Activated CD8-positive, alpha-beta T cell treated with anti-CD3 and anti-CD28 coated beads for 36 hours (primary cell): ENCODE measurements at regions of chr12 and their contacts with region 1.

Region 1: GRCh38 chr12:53344824-53345485 is 8.8 kb upstream of the SP7 start:
- DNase-seq: peak; percentile 85
- ATAC-seq: peak; percentile 86
- H3K4me3 Mint-ChIP-seq: peak overlapping the region; percentile 82
- H3K27ac Mint-ChIP-seq: peak overlapping the region; percentile 71
- H3K4me1 Mint-ChIP-seq: peaks cover 19% of the 10 kb centered on the region
- H3K27me3 Mint-ChIP-seq: peaks cover 3% of the 10 kb centered on the region
- CTCF ChIP-seq: peak; percentile 75

Region 2: DNA sequence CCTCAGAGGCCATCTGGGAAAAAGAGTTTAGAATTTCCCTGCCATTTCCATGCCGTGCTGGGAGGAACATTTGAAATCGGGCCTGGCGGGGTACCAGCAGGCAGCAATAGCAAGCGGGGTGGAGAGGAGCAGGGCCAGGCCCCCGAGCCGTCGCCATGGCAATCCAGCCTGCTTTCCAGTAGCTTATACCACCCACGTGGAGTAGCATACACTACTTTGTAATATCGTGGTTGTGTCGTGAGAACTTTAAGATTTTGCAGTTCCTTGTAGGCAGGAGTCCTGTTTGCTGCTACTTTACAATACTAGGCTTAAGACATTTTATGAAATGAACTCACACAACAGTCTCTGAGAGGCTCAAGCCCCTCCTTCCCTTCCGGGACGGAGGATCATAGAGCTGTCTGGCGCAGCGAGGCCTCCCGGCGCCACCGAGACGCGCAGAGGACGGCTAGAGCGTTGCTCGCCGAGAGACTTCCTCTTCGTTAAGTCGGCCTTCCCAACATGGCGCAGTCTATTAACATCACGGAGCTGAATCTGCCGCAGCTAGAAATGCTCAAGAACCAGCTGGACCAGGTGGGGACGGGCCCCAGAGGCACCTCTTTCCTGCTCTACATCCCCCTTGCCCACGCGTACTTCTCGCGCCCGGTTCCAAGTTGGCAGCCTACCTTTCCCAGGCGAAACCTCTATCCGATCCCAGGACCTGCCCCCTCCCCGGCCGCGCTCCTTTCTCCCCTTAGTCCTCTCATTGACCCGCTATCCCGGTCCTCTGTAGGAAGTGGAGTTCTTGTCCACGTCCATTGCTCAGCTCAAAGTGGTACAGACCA is 49.7 kb before region 1 on chr12 and contains the start of gene PFDN5:
- CTCF ChIA-PET with region 1: interaction called, 16 read pairs
- POLR2A ChIA-PET with region 1: no interaction called
- intact Hi-C with region 1: no loop called
- DNase-seq: peak; percentile 94
- ATAC-seq: peak; percentile 90
- H3K4me3 Mint-ChIP-seq: peak within 1 kb of the TSS; percentile 98
- H3K27ac Mint-ChIP-seq: peak within 1 kb of the TSS; percentile 91
- H3K4me1 Mint-ChIP-seq: peaks cover 43% of the 10 kb centered on the region
- H3K27me3 Mint-ChIP-seq: no peaks in the 10 kb centered on the region
- CTCF ChIP-seq: no peak
- total RNA-seq, gene PFDN5: 322 to 373 TPM

Region 3: DNA sequence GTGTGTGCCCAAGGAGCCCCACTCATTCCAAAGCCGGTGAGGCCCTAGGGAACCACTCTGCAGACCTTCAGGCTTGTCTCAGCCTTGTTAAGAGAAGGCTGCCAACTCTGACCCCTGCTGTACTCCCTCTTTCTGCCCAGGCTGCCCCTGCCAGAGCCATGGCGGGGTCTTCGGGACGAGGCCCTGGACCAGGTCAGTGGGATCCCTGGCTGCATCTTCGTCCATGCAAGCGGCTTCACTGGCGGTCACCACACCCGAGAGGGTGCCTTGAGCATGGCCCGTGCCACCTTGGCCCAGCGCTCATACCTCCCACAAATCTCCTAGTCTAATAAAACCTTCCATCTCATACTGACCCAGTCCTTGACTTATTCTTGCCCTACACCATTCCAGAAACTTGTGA is 38.1 kb before region 1 on chr12:
- CTCF ChIA-PET with region 1: no interaction called
- POLR2A ChIA-PET with region 1: no interaction called
- intact Hi-C with region 1: no loop called
- DNase-seq: no peak
- ATAC-seq: no peak
- H3K4me3 Mint-ChIP-seq: no peak overlapping the region
- H3K27ac Mint-ChIP-seq: no peak overlapping the region
- H3K4me1 Mint-ChIP-seq: peaks cover 13% of the 10 kb centered on the region
- H3K27me3 Mint-ChIP-seq: no peaks in the 10 kb centered on the region
- CTCF ChIP-seq: no peak

Region 4: GRCh38 chr12:53379389-53380103 is 34.6 kb after region 1 on chr12:
- CTCF ChIA-PET with region 1: interaction called, 22 read pairs
- POLR2A ChIA-PET with region 1: interaction called, 4 read pairs
- intact Hi-C with region 1: no loop called
- DNase-seq: peak; percentile 99
- ATAC-seq: peak; percentile 76
- H3K4me3 Mint-ChIP-seq: no peak overlapping the region
- H3K27ac Mint-ChIP-seq: no peak overlapping the region
- H3K4me1 Mint-ChIP-seq: peaks cover 36% of the 10 kb centered on the region
- H3K27me3 Mint-ChIP-seq: no peaks in the 10 kb centered on the region
- CTCF ChIP-seq: no peak

Region 5: GRCh38 chr12:53427905-53428594 is 83.1 kb after region 1 on chr12:
- CTCF ChIA-PET with region 1: interaction called, 44 read pairs
- POLR2A ChIA-PET with region 1: no interaction called
- intact Hi-C with region 1: no loop called
- DNase-seq: peak; percentile 62
- ATAC-seq: peak; percentile 99
- H3K4me3 Mint-ChIP-seq: no peak overlapping the region
- H3K27ac Mint-ChIP-seq: no peak overlapping the region
- H3K4me1 Mint-ChIP-seq: peaks cover 9% of the 10 kb centered on the region
- H3K27me3 Mint-ChIP-seq: no peaks in the 10 kb centered on the region
- CTCF ChIP-seq: no peak